Posterior vena cava (tissue), 2 donors: ENCODE measurements at regions of chr7 and their contacts with region 1.

Region 1: DNA sequence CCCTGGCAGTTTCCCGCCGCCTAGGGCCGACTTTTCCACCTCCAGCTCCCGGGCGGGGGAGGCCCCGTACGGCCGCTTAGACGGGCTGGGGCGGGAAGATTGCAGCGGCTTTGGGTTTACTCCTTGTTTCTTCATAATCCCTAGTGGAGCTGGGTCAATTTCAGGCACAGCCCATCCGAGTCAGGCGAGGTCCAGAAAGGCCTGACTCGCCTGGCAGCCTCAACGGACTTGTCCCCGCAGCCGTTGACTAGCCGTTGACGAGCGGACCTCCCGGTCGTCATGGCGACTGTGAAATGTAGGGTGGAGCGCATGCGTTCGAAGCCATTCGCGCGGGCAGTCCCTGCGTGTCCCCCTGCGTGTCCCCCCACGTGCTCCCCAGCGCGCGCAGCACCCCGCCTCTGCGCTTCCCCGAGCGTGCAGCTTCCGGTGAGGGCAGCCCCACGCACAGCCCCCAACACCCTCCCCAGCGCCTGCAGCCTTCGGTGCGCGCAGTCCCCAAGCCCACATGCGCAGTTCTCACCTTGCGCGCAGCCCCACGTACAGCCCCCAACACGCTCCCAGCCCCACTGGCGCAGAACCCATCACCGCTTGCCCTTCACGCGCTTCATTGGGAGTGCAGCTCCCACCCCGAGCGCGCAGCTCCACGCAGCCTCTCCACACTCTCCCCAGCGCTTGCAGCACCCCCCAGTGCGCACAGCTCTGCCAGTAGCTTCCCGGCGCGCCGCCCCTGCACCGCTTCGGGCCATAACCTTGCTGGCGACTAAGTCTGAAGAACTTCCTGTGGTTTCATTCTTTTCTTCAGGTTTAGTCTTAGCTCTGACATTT is 67.8 kb downstream of the TBX20 start:
- DNase-seq: peak; percentile 78

Region 2: GRCh38 chr7:35537067-35538023 is 351.2 kb after region 1 on chr7:
- intact Hi-C with region 1: loop called in 1 of 2 experiments (anchors 10 kb)
- DNase-seq: peak; percentile 95